Endothelial cell of umbilical vein (primary cell): ENCODE measurements at regions of chr10 and their contacts with region 1.

Region 1: GRCh38 chr10:4704034-4704545 is 121.9 kb upstream of the AKR1E2 start:
- DNase-seq: peak; percentile 98
- H3K4me3 ChIP-seq: no peak overlapping the region
- H3K27ac ChIP-seq: peak overlapping the region; percentile 92
- H3K4me1 ChIP-seq: peaks cover 45% of the 10 kb centered on the region
- H3K27me3 ChIP-seq: no peaks in the 10 kb centered on the region
- CTCF ChIP-seq: no peak
- POLR2A ChIP-seq: peak; percentile 13

Region 2: DNA sequence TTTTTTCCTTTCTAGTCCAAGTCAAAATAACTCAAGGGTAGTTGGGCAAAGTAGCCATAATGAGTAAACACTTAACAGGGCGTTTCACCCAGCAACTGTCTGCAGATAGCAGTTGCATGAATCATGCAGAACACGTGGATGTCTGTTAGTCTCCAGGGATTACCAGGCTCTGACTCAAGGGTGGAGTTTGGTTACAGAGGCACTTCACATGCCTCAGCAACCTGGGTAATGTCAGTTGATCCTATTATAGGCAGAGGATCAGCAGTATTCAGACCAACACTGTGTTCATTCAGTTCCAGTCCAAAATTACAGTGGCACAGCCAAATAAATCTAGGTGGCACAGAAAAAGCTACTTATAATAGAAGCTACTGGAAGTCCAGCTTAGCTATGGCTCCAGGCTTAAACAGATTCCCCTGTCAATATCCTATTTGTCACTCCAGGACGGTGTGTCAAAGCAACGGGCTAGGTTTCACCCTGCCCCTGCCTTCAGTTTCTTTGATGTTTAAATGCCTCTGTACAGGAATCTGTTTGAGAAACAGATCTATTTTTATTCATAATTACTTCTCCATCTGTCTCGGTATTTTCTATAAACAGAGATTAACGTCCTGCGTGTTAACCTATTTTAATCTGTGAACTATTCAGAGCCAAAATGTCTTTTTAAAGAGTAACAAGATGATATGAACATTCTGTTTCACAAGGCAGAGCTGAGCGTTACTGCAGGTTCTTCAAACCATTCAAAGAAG is 40.8 kb before region 1 on chr10:
- CTCF ChIA-PET with region 1: interaction called, 10 read pairs
- POLR2A ChIA-PET with region 1: no interaction called
- dilution Hi-C with region 1: no loop called
- intact Hi-C with region 1: loop called (anchors 2 kb)
- DNase-seq: peak; percentile 97
- H3K4me3 ChIP-seq: no peak overlapping the region
- H3K27ac ChIP-seq: peak overlapping the region; percentile 97
- H3K4me1 ChIP-seq: peaks cover 23% of the 10 kb centered on the region
- H3K27me3 ChIP-seq: no peaks in the 10 kb centered on the region
- CTCF ChIP-seq: no peak
- POLR2A ChIP-seq: peak; percentile 65

Region 3: GRCh38 chr10:4678023-4678950 is 25.8 kb before region 1 on chr10:
- CTCF ChIA-PET with region 1: interaction called, 6 read pairs
- POLR2A ChIA-PET with region 1: interaction called, 4 read pairs
- dilution Hi-C with region 1: no loop called
- intact Hi-C with region 1: loop called (anchors 1 kb)
- DNase-seq: peak; percentile 94
- H3K4me3 ChIP-seq: peak overlapping the region; percentile 32 to 99 (median 71)
- H3K27ac ChIP-seq: peak overlapping the region; percentile 84
- H3K4me1 ChIP-seq: peaks cover 31% of the 10 kb centered on the region
- H3K27me3 ChIP-seq: no peaks in the 10 kb centered on the region
- CTCF ChIP-seq: no peak
- POLR2A ChIP-seq: no peak

Region 4: DNA sequence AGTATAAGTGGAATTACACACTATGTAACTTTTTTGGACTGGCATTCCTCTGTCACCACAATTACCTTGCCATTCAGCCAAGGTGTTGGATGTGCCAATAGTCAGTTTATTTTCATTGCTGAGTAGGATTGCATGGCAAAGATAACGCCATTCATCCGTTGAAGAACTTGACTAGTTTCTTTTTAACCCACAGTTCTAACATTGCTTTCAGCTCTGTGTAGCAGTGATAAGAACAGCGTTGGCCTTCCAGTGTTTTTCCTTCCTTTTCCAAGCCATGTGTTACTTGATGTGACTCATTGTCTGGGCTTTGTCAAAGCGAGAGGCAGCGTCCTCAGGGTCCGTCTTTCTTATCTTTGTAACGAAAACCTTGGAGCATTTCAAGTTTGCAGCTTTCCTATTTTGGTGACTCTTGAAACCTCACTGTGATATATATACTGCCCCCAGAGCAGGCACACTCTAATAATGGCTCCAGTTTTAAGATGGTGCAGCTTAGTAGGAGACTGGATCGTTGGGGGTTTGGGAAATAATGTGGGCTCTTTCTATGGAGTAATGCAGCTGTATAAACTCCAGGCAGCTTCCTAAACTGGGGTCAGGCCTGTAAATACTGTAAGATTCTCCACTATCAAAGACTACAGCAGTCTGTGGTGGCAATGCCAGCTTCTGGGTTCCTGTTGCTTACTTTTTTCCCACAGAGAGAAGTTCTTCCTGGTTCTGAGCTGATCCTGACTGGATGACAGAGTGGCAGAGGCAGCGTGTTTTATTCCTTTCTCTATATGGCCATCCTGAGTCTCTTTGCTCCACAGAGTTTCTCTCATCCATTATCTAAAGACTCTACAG is 163.6 kb after region 1 on chr10:
- CTCF ChIA-PET with region 1: no interaction called
- POLR2A ChIA-PET with region 1: no interaction called
- dilution Hi-C with region 1: no loop called
- intact Hi-C with region 1: no loop called
- DNase-seq: peak; percentile 89
- H3K4me3 ChIP-seq: peak overlapping the region in 1 of 3 experiments; percentile 1
- H3K27ac ChIP-seq: peak overlapping the region; percentile 53
- H3K4me1 ChIP-seq: peaks cover 13% of the 10 kb centered on the region
- H3K27me3 ChIP-seq: no peaks in the 10 kb centered on the region
- CTCF ChIP-seq: no peak
- POLR2A ChIP-seq: no peak